Panc1 (cell line): ENCODE measurements at regions of chr11 and their contacts with region 1.

Region 1: GRCh38 chr11:17906436-17906835 is 106.4 kb downstream of the SERGEF start:
- DNase-seq: no peak
- ATAC-seq: peak; percentile 79; the same call in 1 of the 2 replicates
- H3K4me3 ChIP-seq: no peak overlapping the region
- H3K27ac ChIP-seq: no peak overlapping the region
- H3K4me1 ChIP-seq: no peaks in the 10 kb centered on the region
- H3K27me3 ChIP-seq: no peaks in the 10 kb centered on the region
- CTCF ChIP-seq: peak; percentile 70

Region 2: DNA sequence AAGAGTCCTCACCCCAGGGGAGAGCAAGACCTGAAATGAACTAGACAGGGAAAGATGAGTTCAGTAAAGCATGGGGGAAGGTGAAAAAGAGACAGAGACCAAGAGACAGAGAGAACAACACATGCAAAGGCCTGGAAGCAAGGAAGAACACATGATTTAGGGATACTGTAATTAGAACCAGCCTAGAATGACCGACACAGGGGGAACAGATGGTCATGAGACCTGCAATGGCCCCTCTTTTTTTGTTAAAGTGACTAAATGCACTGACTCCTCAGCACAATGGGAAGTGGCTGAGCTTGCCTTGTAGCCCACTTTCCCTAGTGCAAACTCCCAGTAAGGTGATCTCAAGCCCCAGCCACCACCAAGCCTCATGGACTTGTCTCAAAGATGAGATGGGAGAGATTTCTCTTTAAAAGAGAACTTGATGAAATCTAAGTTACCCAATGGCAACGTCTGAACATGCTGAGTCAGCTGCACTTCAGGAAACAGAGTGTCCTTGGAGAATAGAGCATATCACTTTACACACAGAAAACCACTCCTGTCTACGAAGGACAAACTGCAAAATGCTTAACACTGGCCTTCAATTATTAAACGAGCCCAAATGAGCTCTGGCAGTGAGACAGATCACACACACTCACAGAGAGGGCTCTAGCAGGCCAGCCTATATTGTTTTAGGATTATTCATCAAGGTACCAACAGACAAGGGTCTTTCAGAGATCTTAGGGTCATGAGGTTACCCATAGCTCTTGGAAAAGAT is 15.4 kb after region 1 on chr11:
- CTCF ChIA-PET with region 1: no interaction called
- POLR2A ChIA-PET with region 1: interaction called, 11 read pairs
- in situ Hi-C with region 1: no loop called
- intact Hi-C with region 1: no loop called
- DNase-seq: no peak
- ATAC-seq: no peak
- H3K4me3 ChIP-seq: no peak overlapping the region
- H3K27ac ChIP-seq: no peak overlapping the region
- H3K4me1 ChIP-seq: no peaks in the 10 kb centered on the region
- H3K27me3 ChIP-seq: no peaks in the 10 kb centered on the region
- CTCF ChIP-seq: no peak

Region 3: GRCh38 chr11:18243783-18244362 is 337.4 kb after region 1 on chr11:
- CTCF ChIA-PET with region 1: no interaction called
- POLR2A ChIA-PET with region 1: no interaction called
- in situ Hi-C with region 1: no loop called
- intact Hi-C with region 1: no loop called
- DNase-seq: peak; percentile 54
- ATAC-seq: peak; percentile 78
- H3K4me3 ChIP-seq: no peak overlapping the region
- H3K27ac ChIP-seq: no peak overlapping the region
- H3K4me1 ChIP-seq: no peaks in the 10 kb centered on the region
- H3K27me3 ChIP-seq: peaks cover 8% of the 10 kb centered on the region; the same call in 1 of the 2 replicates
- CTCF ChIP-seq: peak; percentile 91

Region 4: GRCh38 chr11:18368221-18368620 is 461.8 kb after region 1 on chr11:
- CTCF ChIA-PET with region 1: no interaction called
- POLR2A ChIA-PET with region 1: no interaction called
- in situ Hi-C with region 1: no loop called
- intact Hi-C with region 1: no loop called
- DNase-seq: no peak
- ATAC-seq: 0 out of 2 replicates have a peak, but pooled peaks have one; percentile 47
- H3K4me3 ChIP-seq: no peak overlapping the region
- H3K27ac ChIP-seq: no peak overlapping the region
- H3K4me1 ChIP-seq: no peaks in the 10 kb centered on the region
- H3K27me3 ChIP-seq: no peaks in the 10 kb centered on the region
- CTCF ChIP-seq: no peak